CD8-positive, alpha-beta memory T cell (primary cell): ENCODE measurements at regions of chr2 and their contacts with region 1.

Region 1: GRCh38 chr2:189762551-189763298 is at the start of gene OSGEPL1:
- DNase-seq: peak; percentile 86 to 95 (median 89)
- H3K4me3 ChIP-seq: peak within 1 kb of the TSS; percentile 81
- H3K4me3 Mint-ChIP-seq: peak within 1 kb of the TSS; percentile 94 to 100 (median 96)
- H3K27ac ChIP-seq: peak within 1 kb of the TSS; percentile 83
- H3K27ac Mint-ChIP-seq: peak within 1 kb of the TSS; percentile 96 to 100 (median 99)
- H3K4me1 ChIP-seq: peaks cover 14% of the 10 kb centered on the region
- H3K4me1 Mint-ChIP-seq: peaks cover 10 to 23% (median 18%) of the 10 kb centered on the region in 3 donors
- H3K27me3 ChIP-seq: no peaks in the 10 kb centered on the region
- H3K27me3 Mint-ChIP-seq: no peaks in the 10 kb centered on the region
- total RNA-seq, gene OSGEPL1: 12.5 to 13.7 TPM

Region 2: GRCh38 chr2:189609423-189609816 is 153.3 kb before region 1 on chr2:
- CTCF ChIA-PET with region 1: no interaction called
- POLR2A ChIA-PET with region 1: no interaction called
- DNase-seq: no peak
- H3K4me3 ChIP-seq: no peak overlapping the region
- H3K4me3 Mint-ChIP-seq: no peak overlapping the region
- H3K27ac ChIP-seq: no peak overlapping the region
- H3K27ac Mint-ChIP-seq: no peak overlapping the region
- H3K4me1 ChIP-seq: no peaks in the 10 kb centered on the region
- H3K4me1 Mint-ChIP-seq: no peaks in the 10 kb centered on the region
- H3K27me3 ChIP-seq: no peaks in the 10 kb centered on the region
- H3K27me3 Mint-ChIP-seq: no peaks in the 10 kb centered on the region

Region 3: DNA sequence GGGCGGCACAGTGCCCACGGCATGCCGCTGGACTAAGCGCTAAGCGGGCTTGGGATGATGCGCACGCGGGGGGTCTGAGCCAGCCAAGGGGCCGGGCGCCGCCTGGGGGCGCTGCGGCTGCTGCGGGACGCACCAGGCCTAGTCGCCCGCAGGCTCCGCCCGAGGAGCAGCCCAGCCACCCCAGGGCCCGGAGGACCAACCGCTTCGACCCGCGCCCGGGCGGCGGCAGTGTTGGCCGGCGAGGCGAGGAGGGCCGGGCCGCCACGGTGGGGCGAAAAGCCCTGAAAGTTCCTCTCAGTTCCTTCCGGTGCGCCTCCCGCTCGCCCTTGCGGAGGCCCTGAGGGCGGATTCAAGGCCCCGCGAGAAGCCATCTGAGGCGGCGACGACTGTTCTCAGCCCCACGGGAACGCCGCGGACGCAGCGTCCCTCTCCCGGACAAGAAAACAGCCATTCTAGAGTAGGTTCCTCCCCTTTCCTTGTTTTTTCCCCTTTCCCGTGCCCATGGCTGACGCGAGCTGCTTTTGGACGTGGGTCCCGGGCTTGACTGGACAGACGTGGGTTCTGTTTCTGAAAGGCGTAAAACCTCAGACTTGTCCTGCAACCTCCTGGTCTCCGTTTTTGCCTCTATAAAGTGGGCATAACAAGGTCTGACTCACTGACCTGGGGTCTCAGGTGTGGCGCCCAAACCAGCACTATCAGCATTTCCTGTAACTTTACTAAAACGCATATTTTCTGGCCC is 88.2 kb before region 1 on chr2 and contains the start of gene ANKAR:
- CTCF ChIA-PET with region 1: interaction called, 26 read pairs
- POLR2A ChIA-PET with region 1: interaction called, 3 read pairs
- DNase-seq: peak; percentile 74 to 87 (median 83)
- H3K4me3 ChIP-seq: peak within 1 kb of the TSS; percentile 69
- H3K4me3 Mint-ChIP-seq: peak within 1 kb of the TSS; percentile 92 to 99 (median 96)
- H3K27ac ChIP-seq: peak within 1 kb of the TSS; percentile 77
- H3K27ac Mint-ChIP-seq: peak within 1 kb of the TSS; percentile 96 to 100 (median 99)
- H3K4me1 ChIP-seq: peaks cover 18% of the 10 kb centered on the region
- H3K4me1 Mint-ChIP-seq: peaks cover 42 to 51% (median 46%) of the 10 kb centered on the region in 3 donors
- H3K27me3 ChIP-seq: no peaks in the 10 kb centered on the region
- H3K27me3 Mint-ChIP-seq: no peaks in the 10 kb centered on the region
- total RNA-seq, gene ANKAR: 3.2 to 3.3 TPM

Region 4: DNA sequence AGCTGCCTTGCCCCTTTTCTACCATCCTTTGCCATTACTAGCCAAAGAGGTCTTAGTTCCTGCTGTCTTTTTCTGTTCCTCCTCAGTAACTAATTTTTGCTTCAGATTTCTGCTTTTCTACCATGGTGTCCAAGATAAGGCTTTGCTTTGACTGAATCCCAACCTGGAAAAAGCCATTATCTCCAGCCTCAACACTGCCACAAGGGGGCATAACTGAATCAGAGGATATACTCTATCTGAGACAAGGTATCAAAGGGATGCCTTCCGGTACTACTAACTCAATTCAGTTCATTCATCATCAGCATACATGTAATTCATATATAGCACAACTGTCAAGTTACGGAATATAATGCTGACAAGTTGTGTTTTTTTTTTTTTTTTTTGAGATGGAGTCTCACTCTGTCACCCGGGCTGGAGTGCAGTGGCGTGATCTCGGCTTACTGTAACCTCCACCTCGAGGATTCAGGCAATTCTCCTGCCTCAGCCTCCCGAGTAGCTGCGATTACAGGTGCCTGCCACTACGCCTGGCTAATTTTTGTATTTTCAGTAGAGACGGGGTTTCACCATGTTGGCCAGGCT is 11.6 kb before region 1 on chr2:
- CTCF ChIA-PET with region 1: interaction called, 35 read pairs
- POLR2A ChIA-PET with region 1: no interaction called
- DNase-seq: peak in 4 of 5 donors; percentile 7 to 56 (median 34)
- H3K4me3 ChIP-seq: no peak overlapping the region
- H3K4me3 Mint-ChIP-seq: no peak overlapping the region
- H3K27ac ChIP-seq: no peak overlapping the region
- H3K27ac Mint-ChIP-seq: peak overlapping the region in 3 of 8 donors; percentile 48 to 63 (median 52)
- H3K4me1 ChIP-seq: no peaks in the 10 kb centered on the region
- H3K4me1 Mint-ChIP-seq: peaks cover 0 to 3% (median 1%) of the 10 kb centered on the region in 3 donors
- H3K27me3 ChIP-seq: no peaks in the 10 kb centered on the region
- H3K27me3 Mint-ChIP-seq: no peaks in the 10 kb centered on the region

Region 5: DNA sequence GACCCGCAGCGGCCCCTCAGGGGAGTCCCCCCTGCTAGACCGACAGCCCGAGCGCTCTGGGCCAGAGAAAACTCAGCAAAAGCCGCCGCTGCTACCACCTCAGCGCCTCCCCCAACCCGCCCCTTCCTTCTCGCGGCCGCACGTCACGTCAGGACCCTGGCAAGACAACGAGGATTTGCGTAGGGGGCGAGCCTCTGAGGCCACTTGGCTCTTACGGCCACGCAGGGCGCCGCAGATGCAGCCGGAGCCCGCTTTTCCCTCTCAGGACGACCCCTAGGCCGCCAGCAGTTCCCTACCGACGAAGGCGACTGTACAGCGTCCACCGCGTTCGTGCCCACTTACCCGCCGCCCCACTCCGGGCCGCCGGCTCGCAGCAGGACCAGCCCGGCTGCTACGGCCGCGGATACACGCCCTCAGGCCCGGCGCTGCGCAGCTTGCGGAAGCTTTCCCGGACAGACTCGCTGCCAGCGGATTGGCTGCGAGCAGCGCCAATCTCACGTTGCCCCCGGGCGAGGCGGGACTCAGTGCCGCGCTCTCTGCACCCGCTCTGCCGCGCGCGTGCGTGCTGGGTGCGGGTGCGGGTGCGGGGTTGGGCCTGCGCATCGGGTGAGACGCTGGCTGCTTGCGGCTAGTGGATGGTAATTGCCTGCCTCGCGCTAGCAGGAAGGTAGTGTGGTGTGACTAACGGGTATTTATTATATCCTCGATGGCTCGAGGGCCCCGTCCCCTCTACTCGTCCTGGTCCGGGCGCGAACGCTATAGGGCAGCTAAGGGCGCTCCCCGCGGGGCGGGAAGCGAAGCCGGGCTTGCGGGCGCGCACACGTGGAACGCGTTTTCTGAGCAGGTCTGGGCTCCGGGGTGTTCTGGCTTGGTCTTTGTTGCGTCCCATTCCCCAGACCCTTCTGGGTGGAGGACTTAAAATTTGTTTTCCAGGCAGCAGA is 21.5 kb after region 1 on chr2 and contains the starts of genes ORMDL1 and PMS1:
- CTCF ChIA-PET with region 1: interaction called, 37 read pairs
- POLR2A ChIA-PET with region 1: interaction called, 36 read pairs
- DNase-seq: peak; percentile 93 to 96 (median 96)
- H3K4me3 ChIP-seq: peak within 1 kb of the TSS; percentile 89
- H3K4me3 Mint-ChIP-seq: peak within 1 kb of the TSS; percentile 93 to 100 (median 95)
- H3K27ac ChIP-seq: peak within 1 kb of the TSS; percentile 92
- H3K27ac Mint-ChIP-seq: peak within 1 kb of the TSS; percentile 93 to 100 (median 96)
- H3K4me1 ChIP-seq: peaks cover 20% of the 10 kb centered on the region
- H3K4me1 Mint-ChIP-seq: peaks cover 51 to 79% (median 76%) of the 10 kb centered on the region in 3 donors
- H3K27me3 ChIP-seq: no peaks in the 10 kb centered on the region
- H3K27me3 Mint-ChIP-seq: no peaks in the 10 kb centered on the region
- total RNA-seq, gene ORMDL1: 88.4 to 89.5 TPM
- total RNA-seq, gene PMS1: 42.8 to 45.0 TPM